ENCODE measurements at regions of chr12 and their contacts with region 1.

Region 1: GRCh38 chr12:51217968-51218606 is at the start of gene POU6F1:
- DNase-seq: peak in 8 of 10 donors; percentile 35 to 79 (median 60)
- H3K4me3 ChIP-seq: peak within 1 kb of the TSS; percentile 56 to 96 (median 86)
- H3K27ac ChIP-seq: peak within 1 kb of the TSS; percentile 91 to 100 (median 98)
- H3K27me3 ChIP-seq: no peaks in the 10 kb centered on the region
- CTCF ChIP-seq: peak in 50 of 56 donors; percentile 13 to 63 (median 44)
- total RNA-seq, gene POU6F1: 55.9 to 145 (median 76.9) TPM

Region 2: DNA sequence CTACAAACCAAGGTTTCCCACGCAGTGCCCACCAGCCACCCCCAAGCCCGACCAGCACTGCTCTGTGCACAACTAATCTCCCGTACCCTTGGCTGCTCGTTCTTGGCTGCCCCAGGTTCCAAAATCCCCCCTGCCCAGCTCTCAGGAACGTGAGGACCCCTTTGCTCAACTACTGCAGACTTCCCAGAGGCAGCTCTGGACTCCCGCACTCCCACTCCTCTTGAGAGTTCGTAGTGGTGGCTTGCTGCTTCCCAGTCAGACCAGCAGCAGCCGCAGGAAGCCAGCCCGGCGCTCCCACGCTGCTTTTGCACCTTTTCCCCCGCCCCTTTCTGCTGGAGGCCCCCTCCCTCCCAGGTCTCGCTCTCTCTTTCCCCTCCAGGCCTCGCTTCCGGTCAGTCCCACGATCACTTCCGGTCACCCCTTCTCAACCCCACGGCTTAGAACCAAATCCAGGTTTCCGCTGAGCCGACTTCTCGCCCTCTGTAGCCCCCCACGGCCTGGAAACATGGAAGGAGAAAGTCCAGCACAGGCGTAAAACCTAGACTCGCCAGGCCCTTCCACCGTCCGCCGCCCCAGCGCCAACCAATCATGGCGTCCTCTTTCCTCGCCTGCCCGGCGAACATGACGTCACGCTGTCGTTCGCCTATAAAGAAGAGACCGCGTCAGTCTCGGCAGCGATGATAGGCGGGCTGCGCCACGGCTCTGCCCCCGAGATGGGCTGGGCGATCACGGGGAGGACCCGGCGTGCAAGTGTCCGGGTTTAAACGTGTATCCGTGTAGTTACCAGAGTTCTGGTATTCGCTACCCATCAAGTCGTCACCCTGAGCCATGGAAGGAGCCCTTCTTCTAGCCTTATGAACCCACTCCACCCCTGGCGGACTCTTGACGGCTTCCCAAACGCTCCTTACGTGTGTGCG is 45.3 kb before region 1 on chr12 and contains the start of gene TFCP2:
- intact Hi-C with region 1: loop called in 1 of 2 experiments (anchors 2 kb)
- DNase-seq: peak; percentile 93 to 98 (median 97)
- H3K4me3 ChIP-seq: peak within 1 kb of the TSS; percentile 67 to 99 (median 88)
- H3K27ac ChIP-seq: peak within 1 kb of the TSS; percentile 76 to 100 (median 96)
- H3K27me3 ChIP-seq: no peaks in the 10 kb centered on the region
- CTCF ChIP-seq: peak in 14 of 56 donors; percentile 5 to 30 (median 12)
- total RNA-seq, gene TFCP2: 24.3 to 46.0 (median 36.2) TPM

Region 3: DNA sequence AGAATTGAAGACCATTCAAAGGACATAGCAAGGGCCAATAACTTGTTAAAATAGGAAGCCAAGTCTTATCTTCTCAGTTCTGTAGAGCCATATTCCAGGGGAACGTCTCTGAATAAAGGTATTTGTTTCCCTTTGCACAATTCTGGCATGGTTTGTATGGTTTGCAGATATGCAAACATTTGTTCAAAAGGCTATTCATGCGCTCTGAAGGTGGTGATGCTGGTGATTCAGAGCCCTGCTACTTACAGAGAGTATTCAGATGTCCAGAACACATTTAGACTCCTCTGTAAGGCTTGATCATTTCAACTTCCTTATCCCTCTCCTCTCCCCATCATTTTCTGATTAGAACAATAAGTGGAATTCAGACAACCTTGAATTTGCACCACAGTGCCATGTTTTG is 242.4 kb after region 1 on chr12:
- intact Hi-C with region 1: no loop called
- DNase-seq: no peak
- H3K4me3 ChIP-seq: no peak overlapping the region
- H3K27ac ChIP-seq: peak overlapping the region in 38 of 59 donors; percentile 1 to 71 (median 40)
- H3K27me3 ChIP-seq: no peaks in the 10 kb centered on the region
- CTCF ChIP-seq: no peak